Activated naive CD4-positive, alpha-beta T cell treated with anti-CD3 and anti-CD28 coated beads for 36 hours (primary cell): ENCODE measurements at regions of chr2 and their contacts with region 1.

Region 1: GRCh38 chr2:44479122-44479887 is 117.6 kb downstream of the CAMKMT start:
- DNase-seq: peak; percentile 56
- H3K4me3 Mint-ChIP-seq: no peak overlapping the region
- H3K27ac Mint-ChIP-seq: no peak overlapping the region
- H3K4me1 Mint-ChIP-seq: peaks cover 7% of the 10 kb centered on the region
- H3K27me3 Mint-ChIP-seq: no peaks in the 10 kb centered on the region

Region 2: GRCh38 chr2:43890855-43891254 is 588.5 kb before region 1 on chr2:
- CTCF ChIA-PET with region 1: no interaction called
- intact Hi-C with region 1: no loop called
- DNase-seq: no peak
- H3K4me3 Mint-ChIP-seq: no peak overlapping the region
- H3K27ac Mint-ChIP-seq: no peak overlapping the region
- H3K4me1 Mint-ChIP-seq: peaks cover 1% of the 10 kb centered on the region
- H3K27me3 Mint-ChIP-seq: no peaks in the 10 kb centered on the region

Region 3: DNA sequence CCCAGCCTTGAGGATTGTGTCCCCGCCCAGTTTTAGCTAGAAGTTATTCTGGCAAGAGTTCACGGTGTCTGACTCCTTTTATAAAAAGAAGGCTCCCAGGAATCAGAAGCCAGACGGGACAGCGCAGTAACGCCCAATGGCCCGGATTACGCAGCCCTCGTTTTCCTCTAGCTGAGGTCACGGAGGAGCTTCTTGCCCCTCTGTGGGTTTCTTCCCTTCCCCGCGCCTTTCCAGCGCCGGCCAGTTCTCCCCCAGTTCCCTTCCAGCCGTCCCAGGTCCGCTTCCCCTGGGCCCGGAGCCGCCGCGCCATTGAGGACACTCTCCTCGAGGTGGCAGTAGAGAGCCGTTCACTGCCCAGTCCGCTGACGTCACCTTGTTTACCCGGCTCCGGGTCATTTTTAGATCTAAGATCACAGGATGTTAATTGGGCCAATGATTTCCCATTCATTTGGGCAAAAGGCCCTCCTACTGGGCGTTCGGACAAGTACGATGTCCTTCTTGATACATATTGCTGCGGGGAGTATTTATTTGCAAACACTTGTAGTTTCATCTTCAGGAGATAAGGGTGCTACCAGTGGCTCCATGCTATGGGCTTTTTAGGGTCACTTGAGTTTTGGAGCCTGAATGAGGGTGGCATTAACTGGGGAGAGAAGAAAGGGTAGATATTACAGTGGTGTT is 392.1 kb before region 1 on chr2:
- CTCF ChIA-PET with region 1: interaction called, 8 read pairs
- intact Hi-C with region 1: loop called (anchors 1 kb)
- DNase-seq: peak; percentile 91
- H3K4me3 Mint-ChIP-seq: peak overlapping the region; percentile 66
- H3K27ac Mint-ChIP-seq: peak overlapping the region; percentile 54
- H3K4me1 Mint-ChIP-seq: peaks cover 13% of the 10 kb centered on the region
- H3K27me3 Mint-ChIP-seq: no peaks in the 10 kb centered on the region

Region 4: DNA sequence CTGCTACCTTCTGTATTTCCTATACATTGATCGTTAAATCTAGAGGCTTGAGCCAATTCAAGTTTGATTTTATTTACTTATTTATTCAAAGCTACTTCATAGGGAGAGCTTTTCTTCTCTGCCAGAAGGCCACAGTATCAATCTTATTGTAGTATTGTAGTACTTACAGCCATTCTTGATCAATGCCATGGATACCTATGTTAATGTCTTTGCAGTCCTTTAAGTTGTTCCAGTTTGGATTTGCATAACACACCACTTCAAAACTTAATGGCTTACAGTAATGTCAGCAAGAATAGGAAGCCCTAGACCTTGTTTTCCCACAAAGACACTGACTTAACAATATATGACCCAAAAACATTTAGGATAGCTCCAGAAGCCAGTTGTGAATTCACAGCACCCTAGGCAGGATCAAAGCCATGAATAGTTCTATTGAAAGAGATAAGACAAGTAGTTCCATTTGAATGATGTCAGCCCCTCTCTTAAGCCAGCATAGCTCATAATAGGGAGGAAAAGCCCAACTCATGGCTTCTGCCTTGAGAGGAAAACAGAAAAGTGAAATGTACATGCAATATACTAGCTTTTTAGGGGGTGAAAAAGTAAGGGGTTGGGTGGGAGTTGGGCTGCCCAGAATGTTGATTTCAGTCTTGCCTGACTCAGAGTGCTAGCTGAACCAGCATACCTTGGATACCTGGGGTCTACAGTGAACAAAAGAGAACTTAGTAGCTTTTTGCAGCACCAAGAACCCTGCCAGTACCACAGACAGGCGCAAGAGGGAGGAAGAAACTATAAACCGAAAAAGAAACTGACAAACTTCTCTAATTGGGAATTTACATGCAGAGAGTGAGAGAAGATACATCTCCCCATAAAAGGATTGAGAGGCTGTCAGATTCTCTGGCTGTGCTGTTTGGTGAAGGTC is 16.1 kb before region 1 on chr2:
- CTCF ChIA-PET with region 1: interaction called, 15 read pairs
- intact Hi-C with region 1: no loop called
- DNase-seq: no peak
- H3K4me3 Mint-ChIP-seq: no peak overlapping the region
- H3K27ac Mint-ChIP-seq: no peak overlapping the region
- H3K4me1 Mint-ChIP-seq: no peaks in the 10 kb centered on the region
- H3K27me3 Mint-ChIP-seq: no peaks in the 10 kb centered on the region

Region 5: GRCh38 chr2:44616667-44617155 is 137.4 kb after region 1 on chr2:
- CTCF ChIA-PET with region 1: interaction called, 6 read pairs
- intact Hi-C with region 1: loop called (anchors 2 kb)
- DNase-seq: peak; percentile 22
- H3K4me3 Mint-ChIP-seq: no peak overlapping the region
- H3K27ac Mint-ChIP-seq: no peak overlapping the region
- H3K4me1 Mint-ChIP-seq: peaks cover 7% of the 10 kb centered on the region
- H3K27me3 Mint-ChIP-seq: no peaks in the 10 kb centered on the region

Region 6: DNA sequence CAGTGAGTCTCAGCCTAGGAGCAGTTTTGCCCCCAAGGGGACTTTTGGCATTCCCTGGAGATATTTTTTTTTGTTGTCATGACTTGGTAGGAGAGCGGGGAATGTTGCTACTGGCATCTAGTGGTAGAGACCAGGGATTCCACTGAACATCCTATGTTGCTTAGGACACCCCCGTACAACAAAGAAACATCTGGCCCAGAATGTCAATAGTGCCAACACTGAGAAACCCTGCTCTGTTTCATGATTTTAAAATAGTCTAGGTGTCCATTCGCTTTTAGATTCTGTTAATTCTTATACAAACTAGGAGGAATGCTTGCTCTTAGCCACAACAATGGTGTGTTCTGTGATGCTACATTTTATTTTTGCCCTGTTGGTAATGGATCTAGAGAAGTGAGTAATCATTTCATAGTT is 236.4 kb after region 1 on chr2:
- CTCF ChIA-PET with region 1: interaction called, 8 read pairs
- intact Hi-C with region 1: loop called (anchors 1 kb)
- DNase-seq: no peak
- H3K4me3 Mint-ChIP-seq: no peak overlapping the region
- H3K27ac Mint-ChIP-seq: no peak overlapping the region
- H3K4me1 Mint-ChIP-seq: no peaks in the 10 kb centered on the region
- H3K27me3 Mint-ChIP-seq: no peaks in the 10 kb centered on the region

Region 7: GRCh38 chr2:45494269-45494977 is 1015.1 kb after region 1 on chr2:
- CTCF ChIA-PET with region 1: no interaction called
- intact Hi-C with region 1: loop called (anchors 10 kb)
- DNase-seq: no peak
- H3K4me3 Mint-ChIP-seq: no peak overlapping the region
- H3K27ac Mint-ChIP-seq: no peak overlapping the region
- H3K4me1 Mint-ChIP-seq: peaks cover 30% of the 10 kb centered on the region
- H3K27me3 Mint-ChIP-seq: no peaks in the 10 kb centered on the region